ENCODE measurements at regions of chr22 and their contacts with region 1.

Region 1: DNA sequence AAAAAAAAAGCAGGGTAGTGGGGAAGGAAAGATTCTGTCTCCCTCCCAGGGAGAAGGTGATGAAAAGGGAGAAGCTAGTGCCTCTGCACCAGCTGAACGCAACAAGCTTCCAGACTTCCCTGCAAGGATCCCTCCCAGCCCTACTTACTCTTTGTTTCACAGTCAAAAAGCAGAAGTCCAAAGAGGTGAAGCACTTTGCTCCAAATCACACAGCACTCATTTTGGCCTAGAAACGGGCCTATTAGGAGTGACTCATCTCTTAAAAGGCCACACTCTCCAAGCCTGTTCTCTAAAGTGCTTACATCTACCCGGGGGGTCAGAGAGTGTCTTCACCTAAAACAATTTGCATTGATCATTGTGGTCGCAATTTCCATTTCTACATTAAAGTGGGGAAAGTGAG is 17.7 kb upstream of the GRK3 start:
- H3K4me3 Mint-ChIP-seq: no peak overlapping the region
- H3K27ac Mint-ChIP-seq: peak overlapping the region; percentile 74
- H3K4me1 Mint-ChIP-seq: peaks cover 62% of the 10 kb centered on the region
- H3K27me3 Mint-ChIP-seq: peaks cover 2% of the 10 kb centered on the region

Region 2: GRCh38 chr22:25172153-25172552 is 374.6 kb before region 1 on chr22:
- intact Hi-C with region 1: no loop called
- H3K4me3 Mint-ChIP-seq: no peak overlapping the region
- H3K27ac Mint-ChIP-seq: no peak overlapping the region
- H3K4me1 Mint-ChIP-seq: no peaks in the 10 kb centered on the region
- H3K27me3 Mint-ChIP-seq: no peaks in the 10 kb centered on the region

Region 3: GRCh38 chr22:25465949-25466348 is 80.8 kb before region 1 on chr22:
- intact Hi-C with region 1: no loop called
- H3K4me3 Mint-ChIP-seq: no peak overlapping the region
- H3K27ac Mint-ChIP-seq: peak overlapping the region; percentile 60
- H3K4me1 Mint-ChIP-seq: peaks cover 17% of the 10 kb centered on the region
- H3K27me3 Mint-ChIP-seq: no peaks in the 10 kb centered on the region

Region 4: DNA sequence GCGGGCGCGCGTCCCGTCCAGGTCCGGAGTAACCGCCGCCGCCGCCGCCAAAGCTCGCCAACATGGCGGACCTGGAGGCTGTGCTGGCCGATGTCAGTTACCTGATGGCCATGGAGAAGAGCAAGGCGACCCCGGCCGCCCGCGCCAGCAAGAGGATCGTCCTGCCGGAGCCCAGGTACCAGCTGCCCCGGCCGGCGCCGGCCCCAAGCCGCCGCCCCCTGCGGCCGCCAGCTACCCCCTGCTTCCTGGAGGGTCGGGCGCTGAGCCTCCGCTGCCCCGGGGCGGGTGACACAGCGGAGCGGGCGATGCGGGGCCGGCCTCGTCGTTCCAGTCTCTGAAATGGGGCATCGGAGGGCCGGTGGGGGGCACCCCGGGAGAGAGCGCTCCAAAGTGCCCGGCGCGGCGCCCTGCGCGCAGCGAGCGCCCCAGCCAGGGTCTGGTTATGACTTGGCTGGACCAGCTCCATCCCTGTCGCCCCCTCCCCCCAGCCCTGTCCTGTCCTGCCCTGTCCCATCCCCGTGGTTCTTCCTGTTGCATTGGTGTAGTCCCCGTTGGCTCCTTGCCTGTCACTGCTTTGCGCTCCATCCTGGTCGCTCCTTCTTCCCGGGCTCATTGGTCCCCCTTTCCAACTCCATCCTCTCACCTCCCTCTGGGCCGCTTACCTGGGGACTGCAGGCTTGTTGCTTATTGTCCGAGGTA is 18.4 kb after region 1 on chr22:
- intact Hi-C with region 1: loop called (anchors 2 kb)
- H3K4me3 Mint-ChIP-seq: peak overlapping the region; percentile 94
- H3K27ac Mint-ChIP-seq: peak overlapping the region; percentile 94
- H3K4me1 Mint-ChIP-seq: peaks cover 39% of the 10 kb centered on the region
- H3K27me3 Mint-ChIP-seq: no peaks in the 10 kb centered on the region

Region 5: GRCh38 chr22:25623310-25623734 is 76.6 kb after region 1 on chr22:
- intact Hi-C with region 1: loop called (anchors 10 kb)
- H3K4me3 Mint-ChIP-seq: no peak overlapping the region
- H3K27ac Mint-ChIP-seq: no peak overlapping the region
- H3K4me1 Mint-ChIP-seq: peaks cover 28% of the 10 kb centered on the region
- H3K27me3 Mint-ChIP-seq: no peaks in the 10 kb centered on the region

Region 6: GRCh38 chr22:25656724-25657123 is 110.0 kb after region 1 on chr22:
- intact Hi-C with region 1: loop called (anchors 10 kb)
- H3K4me3 Mint-ChIP-seq: no peak overlapping the region
- H3K27ac Mint-ChIP-seq: peak overlapping the region; percentile 18
- H3K4me1 Mint-ChIP-seq: peaks cover 51% of the 10 kb centered on the region
- H3K27me3 Mint-ChIP-seq: no peaks in the 10 kb centered on the region

Measured in dendritic cell treated with granulocyte-macrophage colony-stimulating factor and Interleukin-4, amounts not matched to agents 40 ng/mL and 50 ng/mL, for 4 days (primary cell).